Caco-2 (cell line): ENCODE measurements at regions of chr5 and their contacts with region 1.

Region 1: DNA sequence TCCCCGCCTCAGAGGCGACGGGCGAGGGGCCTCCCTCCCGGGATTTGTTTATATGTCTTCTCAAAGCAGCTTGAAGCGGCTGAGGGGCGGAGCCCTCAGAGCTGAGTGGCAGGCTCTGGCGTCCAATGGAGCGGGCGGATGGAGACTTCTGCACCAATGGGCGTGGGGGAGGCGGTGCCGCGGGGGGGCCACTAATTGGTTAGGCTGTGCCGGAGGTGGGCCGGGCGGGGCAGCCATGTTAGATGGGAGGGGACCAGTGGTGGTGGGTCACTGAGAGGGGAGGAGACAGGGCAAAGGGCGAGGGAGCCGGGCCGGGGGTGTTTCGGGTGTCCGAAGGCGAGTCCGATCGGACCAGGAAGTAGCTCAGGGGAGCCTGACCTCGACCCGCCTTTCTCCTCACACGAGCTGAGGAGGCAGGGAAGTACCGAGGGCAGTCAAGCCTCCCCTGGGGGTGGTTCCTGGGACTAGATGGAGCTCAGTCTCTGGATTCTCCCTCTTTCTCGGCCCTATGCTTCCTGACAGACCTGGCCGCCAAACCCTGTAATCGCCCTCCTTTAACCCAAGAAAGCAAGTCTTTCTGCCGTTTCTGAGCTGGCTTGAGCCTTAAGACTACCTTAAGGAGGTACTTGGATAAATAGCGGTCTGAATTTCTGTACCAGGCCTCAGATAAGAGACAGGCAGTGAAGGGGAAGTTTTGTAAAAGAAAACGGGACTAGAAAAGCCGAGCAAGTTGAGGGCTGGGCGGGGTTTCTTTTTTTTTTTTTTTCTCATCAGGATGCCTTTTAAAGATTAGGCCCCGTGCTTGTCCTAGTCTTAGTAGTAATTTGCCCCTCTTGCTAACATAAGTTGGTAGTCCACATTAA is 1.1 kb downstream of the CREBRF start:
- DNase-seq: peak; percentile 100
- H3K4me3 ChIP-seq: peak overlapping the region; percentile 95
- H3K4me3 Mint-ChIP-seq: peak overlapping the region; percentile 94
- H3K27ac Mint-ChIP-seq: peak overlapping the region; percentile 90
- H3K4me1 ChIP-seq: peaks cover 22% of the 10 kb centered on the region
- H3K4me1 Mint-ChIP-seq: peaks cover 15% of the 10 kb centered on the region
- H3K27me3 ChIP-seq: no peaks in the 10 kb centered on the region
- H3K27me3 Mint-ChIP-seq: no peaks in the 10 kb centered on the region
- CTCF ChIP-seq: peak in 1 of 2 experiments; percentile 30

Region 2: GRCh38 chr5:172958331-172959046 is 98.8 kb before region 1 on chr5:
- CTCF ChIA-PET with region 1: interaction called, 3 read pairs
- POLR2A ChIA-PET with region 1: no interaction called
- intact Hi-C with region 1: loop called (anchors 1 kb)
- DNase-seq: peak; percentile 75 to 76
- H3K4me3 ChIP-seq: peak overlapping the region; percentile 96
- H3K4me3 Mint-ChIP-seq: peak overlapping the region; percentile 100
- H3K27ac Mint-ChIP-seq: peak overlapping the region; percentile 98
- H3K4me1 ChIP-seq: peaks cover 15% of the 10 kb centered on the region
- H3K4me1 Mint-ChIP-seq: peaks cover 7% of the 10 kb centered on the region
- H3K27me3 ChIP-seq: no peaks in the 10 kb centered on the region
- H3K27me3 Mint-ChIP-seq: no peaks in the 10 kb centered on the region
- CTCF ChIP-seq: no peak

Region 3: GRCh38 chr5:172984243-172984953 is 72.9 kb before region 1 on chr5:
- CTCF ChIA-PET with region 1: interaction called, 29 read pairs
- POLR2A ChIA-PET with region 1: interaction called, 17 read pairs
- intact Hi-C with region 1: loop called (anchors 1 kb)
- DNase-seq: peak; percentile 78 to 79
- H3K4me3 ChIP-seq: peak overlapping the region; percentile 94
- H3K4me3 Mint-ChIP-seq: peak overlapping the region; percentile 87
- H3K27ac Mint-ChIP-seq: peak overlapping the region; percentile 95
- H3K4me1 ChIP-seq: peaks cover 11% of the 10 kb centered on the region
- H3K4me1 Mint-ChIP-seq: peaks cover 7% of the 10 kb centered on the region
- H3K27me3 ChIP-seq: no peaks in the 10 kb centered on the region
- H3K27me3 Mint-ChIP-seq: no peaks in the 10 kb centered on the region
- CTCF ChIP-seq: peak; percentile 33 to 72

Region 4: DNA sequence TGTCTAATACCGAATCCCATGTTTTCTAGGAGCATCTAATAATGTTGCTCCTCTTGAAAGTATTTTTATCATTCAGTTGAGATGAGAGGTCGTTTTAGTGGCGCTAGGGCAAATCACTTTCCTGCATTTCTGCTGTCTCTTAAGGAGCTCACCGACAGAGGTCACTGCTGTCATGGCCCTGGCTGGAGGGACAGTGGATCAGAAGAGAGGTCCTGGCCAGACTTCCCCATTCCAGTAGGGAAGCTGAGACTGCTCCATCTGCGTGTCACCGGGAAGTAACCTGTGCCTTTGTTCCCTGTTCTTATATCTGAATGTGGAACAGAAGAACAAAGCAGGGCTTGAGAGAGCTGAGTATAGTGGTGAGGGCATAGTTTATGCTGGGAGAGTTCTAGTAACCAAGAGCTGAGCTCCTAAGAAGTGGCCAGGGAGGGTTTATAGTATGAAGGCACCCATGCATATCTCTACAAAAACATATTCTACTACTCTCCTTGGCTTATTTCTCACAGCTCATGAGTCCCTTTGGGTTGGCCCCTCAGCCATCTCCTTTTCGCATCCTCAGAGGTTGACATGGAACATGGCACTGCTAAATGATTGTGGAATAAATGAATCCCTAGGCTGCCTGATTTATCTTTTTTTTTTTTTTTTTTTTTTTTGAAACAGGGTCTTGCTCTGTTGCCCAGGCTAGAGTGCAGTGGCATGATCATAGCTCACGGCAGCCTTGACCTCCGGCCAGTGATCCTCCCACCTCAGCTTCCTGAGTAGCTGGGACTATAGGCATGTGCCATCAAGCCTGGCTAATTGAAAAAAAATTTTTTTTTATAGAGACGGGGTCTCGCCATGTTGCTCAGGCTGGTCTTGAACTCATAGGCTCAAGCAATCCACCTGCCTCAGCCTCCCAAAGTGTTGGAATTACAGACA is 46.5 kb before region 1 on chr5:
- CTCF ChIA-PET with region 1: interaction called, 6 read pairs
- POLR2A ChIA-PET with region 1: interaction called, 4 read pairs
- intact Hi-C with region 1: loop called (anchors 5 kb)
- DNase-seq: peak; percentile 39 to 45
- H3K4me3 ChIP-seq: no peak overlapping the region
- H3K4me3 Mint-ChIP-seq: no peak overlapping the region
- H3K27ac Mint-ChIP-seq: no peak overlapping the region
- H3K4me1 ChIP-seq: no peaks in the 10 kb centered on the region
- H3K4me1 Mint-ChIP-seq: peaks cover 12% of the 10 kb centered on the region
- H3K27me3 ChIP-seq: no peaks in the 10 kb centered on the region
- H3K27me3 Mint-ChIP-seq: no peaks in the 10 kb centered on the region
- CTCF ChIP-seq: peak in 1 of 2 experiments; percentile 42

Region 5: DNA sequence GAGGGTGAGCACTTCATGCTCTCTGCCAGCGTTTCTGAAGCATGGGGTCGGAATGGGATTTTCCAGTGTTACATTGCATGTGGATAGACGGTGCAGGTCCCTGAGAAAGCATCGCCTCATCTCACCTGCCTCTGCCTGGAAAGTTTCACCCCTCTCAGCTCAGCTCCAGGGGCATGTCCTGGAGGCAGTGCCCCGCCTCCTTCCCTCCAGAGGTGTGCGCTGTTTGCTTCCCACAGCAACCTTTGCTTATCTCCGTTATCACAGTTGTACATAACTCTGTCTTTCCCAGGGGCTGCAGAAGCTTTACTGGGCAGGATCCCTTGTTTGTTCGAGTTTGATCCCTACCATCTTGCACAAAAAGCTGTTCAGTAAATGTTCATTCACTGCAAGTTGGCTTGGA is 11.8 kb before region 1 on chr5:
- CTCF ChIA-PET with region 1: interaction called, 6 read pairs
- POLR2A ChIA-PET with region 1: interaction called, 8 read pairs
- intact Hi-C with region 1: loop called (anchors 1 kb)
- DNase-seq: peak; percentile 86 to 93
- H3K4me3 ChIP-seq: no peak overlapping the region
- H3K4me3 Mint-ChIP-seq: peak overlapping the region; percentile 45
- H3K27ac Mint-ChIP-seq: peak overlapping the region; percentile 88
- H3K4me1 ChIP-seq: peaks cover 56% of the 10 kb centered on the region
- H3K4me1 Mint-ChIP-seq: peaks cover 23% of the 10 kb centered on the region
- H3K27me3 ChIP-seq: no peaks in the 10 kb centered on the region
- H3K27me3 Mint-ChIP-seq: no peaks in the 10 kb centered on the region
- CTCF ChIP-seq: peak in 1 of 2 experiments; percentile 11

Region 6: GRCh38 chr5:173144200-173145176 is 87.2 kb after region 1 on chr5 and contains the start of gene BNIP1:
- CTCF ChIA-PET with region 1: interaction called, 11 read pairs
- POLR2A ChIA-PET with region 1: interaction called, 3 read pairs
- intact Hi-C with region 1: loop called (anchors 1 kb)
- DNase-seq: peak; percentile 97 to 99
- H3K4me3 ChIP-seq: peak within 1 kb of the TSS; percentile 86
- H3K4me3 Mint-ChIP-seq: peak within 1 kb of the TSS; percentile 100
- H3K27ac Mint-ChIP-seq: peak within 1 kb of the TSS; percentile 100
- H3K4me1 ChIP-seq: peaks cover 3% of the 10 kb centered on the region; the same call in 1 of the 2 replicates
- H3K4me1 Mint-ChIP-seq: peaks cover 7% of the 10 kb centered on the region
- H3K27me3 ChIP-seq: no peaks in the 10 kb centered on the region
- H3K27me3 Mint-ChIP-seq: no peaks in the 10 kb centered on the region
- CTCF ChIP-seq: peak; percentile 78 to 98
- total RNA-seq, gene BNIP1: 13.9 and 15.3 TPM in 2 replicates

Region 7: GRCh38 chr5:173163219-173163618 is 105.9 kb after region 1 on chr5:
- CTCF ChIA-PET with region 1: no interaction called
- POLR2A ChIA-PET with region 1: no interaction called
- intact Hi-C with region 1: no loop called
- DNase-seq: no peak
- H3K4me3 ChIP-seq: no peak overlapping the region
- H3K4me3 Mint-ChIP-seq: no peak overlapping the region
- H3K27ac Mint-ChIP-seq: no peak overlapping the region
- H3K4me1 ChIP-seq: no peaks in the 10 kb centered on the region
- H3K4me1 Mint-ChIP-seq: no peaks in the 10 kb centered on the region
- H3K27me3 ChIP-seq: no peaks in the 10 kb centered on the region
- H3K27me3 Mint-ChIP-seq: no peaks in the 10 kb centered on the region
- CTCF ChIP-seq: no peak

Region 8: DNA sequence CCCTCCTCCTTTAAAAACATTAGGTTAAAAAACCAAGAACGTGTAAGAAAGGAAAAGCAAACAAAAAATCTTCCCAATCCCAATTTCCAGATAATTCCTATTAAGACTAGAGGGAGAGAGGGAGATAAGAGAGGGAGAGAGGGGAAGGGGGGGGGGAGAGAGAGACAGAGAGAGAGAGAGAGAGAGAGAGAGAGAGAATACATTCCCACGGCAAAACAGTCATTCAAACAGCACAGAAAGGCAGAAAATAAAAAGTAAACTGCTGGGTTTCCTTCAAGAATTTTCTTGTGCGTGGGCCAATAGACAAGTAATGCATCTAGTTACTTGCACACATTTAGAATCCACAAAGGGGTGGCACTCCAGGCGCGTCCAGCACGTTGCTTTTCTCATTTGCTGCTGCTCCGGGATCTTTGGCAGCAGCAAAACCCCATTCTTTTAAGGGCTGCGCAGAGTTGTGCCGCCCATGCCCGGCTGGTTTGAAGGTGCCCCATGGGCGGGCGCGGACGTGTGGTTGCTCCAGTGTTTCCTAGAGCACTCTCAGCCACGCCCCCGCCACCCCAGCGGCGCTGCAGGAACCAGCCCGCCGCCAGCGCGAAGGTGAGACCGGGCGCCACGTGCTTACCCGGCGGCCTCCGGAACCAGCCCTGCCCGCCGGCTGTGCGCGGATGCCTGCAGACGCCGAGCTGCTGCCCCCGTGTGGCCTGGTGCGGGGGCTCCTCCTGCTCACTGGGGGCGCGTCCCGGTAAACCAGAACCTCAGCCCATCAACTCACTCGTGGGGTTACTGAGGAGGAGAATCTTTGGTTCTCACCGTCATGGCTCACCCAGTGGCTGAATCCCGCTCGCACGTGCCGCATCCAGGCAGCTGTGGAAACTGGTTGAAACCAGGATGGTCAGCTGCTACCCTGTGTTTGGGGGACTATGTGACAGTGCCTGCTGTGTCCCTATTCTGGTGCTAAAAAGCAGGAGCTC is 226.3 kb after region 1 on chr5:
- CTCF ChIA-PET with region 1: interaction called, 3 read pairs
- POLR2A ChIA-PET with region 1: no interaction called
- intact Hi-C with region 1: loop called (anchors 5 kb)
- DNase-seq: peak; percentile 91 to 94
- H3K4me3 ChIP-seq: peak overlapping the region; percentile 46
- H3K4me3 Mint-ChIP-seq: peak overlapping the region; percentile 73
- H3K27ac Mint-ChIP-seq: no peak overlapping the region
- H3K4me1 ChIP-seq: peaks cover 8% of the 10 kb centered on the region; the same call in 1 of the 2 replicates
- H3K4me1 Mint-ChIP-seq: peaks cover 8% of the 10 kb centered on the region
- H3K27me3 ChIP-seq: no peaks in the 10 kb centered on the region
- H3K27me3 Mint-ChIP-seq: peaks cover 15% of the 10 kb centered on the region
- CTCF ChIP-seq: peak; percentile 91 to 92